ENCODE measurements at regions of chr1 and their contacts with region 1.

Region 1: GRCh38 chr1:91885716-91886506 is at the start of gene TGFBR3:
- DNase-seq: peak; percentile 56 to 89 (median 83)
- ATAC-seq: peak; percentile 77
- H3K4me3 ChIP-seq: peak within 1 kb of the TSS; percentile 61 to 71
- H3K4me3 Mint-ChIP-seq: peak within 1 kb of the TSS; percentile 94
- H3K27ac ChIP-seq: peak within 1 kb of the TSS; percentile 40 to 63
- H3K27ac Mint-ChIP-seq: peak within 1 kb of the TSS; percentile 91
- H3K4me1 ChIP-seq: peaks cover 12% of the 10 kb centered on the region
- H3K4me1 Mint-ChIP-seq: peaks cover 31% of the 10 kb centered on the region
- H3K27me3 ChIP-seq: no peaks in the 10 kb centered on the region
- H3K27me3 Mint-ChIP-seq: no peaks in the 10 kb centered on the region
- CTCF ChIP-seq: no peak
- total RNA-seq, gene TGFBR3: 36.7 to 37.9 TPM

Region 2: GRCh38 chr1:91572044-91572443 is 313.9 kb before region 1 on chr1:
- CTCF ChIA-PET with region 1: no interaction called
- POLR2A ChIA-PET with region 1: no interaction called
- intact Hi-C with region 1: no loop called
- DNase-seq: peak in 1 of 9 experiments; percentile 34
- ATAC-seq: no peak
- H3K4me3 ChIP-seq: no peak overlapping the region
- H3K4me3 Mint-ChIP-seq: no peak overlapping the region
- H3K27ac ChIP-seq: no peak overlapping the region
- H3K27ac Mint-ChIP-seq: no peak overlapping the region
- H3K4me1 ChIP-seq: peaks cover 14% of the 10 kb centered on the region
- H3K4me1 Mint-ChIP-seq: peaks cover 28% of the 10 kb centered on the region
- H3K27me3 ChIP-seq: no peaks in the 10 kb centered on the region
- H3K27me3 Mint-ChIP-seq: no peaks in the 10 kb centered on the region
- CTCF ChIP-seq: no peak

Region 3: GRCh38 chr1:91591175-91591968 is 294.5 kb before region 1 on chr1:
- CTCF ChIA-PET with region 1: no interaction called
- POLR2A ChIA-PET with region 1: no interaction called
- intact Hi-C with region 1: no loop called
- DNase-seq: peak in 1 of 9 experiments; percentile 12
- ATAC-seq: no peak
- H3K4me3 ChIP-seq: peak overlapping the region in 1 of 2 experiments; percentile 16
- H3K4me3 Mint-ChIP-seq: peak overlapping the region; percentile 53
- H3K27ac ChIP-seq: no peak overlapping the region
- H3K27ac Mint-ChIP-seq: no peak overlapping the region
- H3K4me1 ChIP-seq: peaks cover 11% of the 10 kb centered on the region
- H3K4me1 Mint-ChIP-seq: peaks cover 17% of the 10 kb centered on the region
- H3K27me3 ChIP-seq: no peaks in the 10 kb centered on the region
- H3K27me3 Mint-ChIP-seq: no peaks in the 10 kb centered on the region
- CTCF ChIP-seq: no peak

Region 4: DNA sequence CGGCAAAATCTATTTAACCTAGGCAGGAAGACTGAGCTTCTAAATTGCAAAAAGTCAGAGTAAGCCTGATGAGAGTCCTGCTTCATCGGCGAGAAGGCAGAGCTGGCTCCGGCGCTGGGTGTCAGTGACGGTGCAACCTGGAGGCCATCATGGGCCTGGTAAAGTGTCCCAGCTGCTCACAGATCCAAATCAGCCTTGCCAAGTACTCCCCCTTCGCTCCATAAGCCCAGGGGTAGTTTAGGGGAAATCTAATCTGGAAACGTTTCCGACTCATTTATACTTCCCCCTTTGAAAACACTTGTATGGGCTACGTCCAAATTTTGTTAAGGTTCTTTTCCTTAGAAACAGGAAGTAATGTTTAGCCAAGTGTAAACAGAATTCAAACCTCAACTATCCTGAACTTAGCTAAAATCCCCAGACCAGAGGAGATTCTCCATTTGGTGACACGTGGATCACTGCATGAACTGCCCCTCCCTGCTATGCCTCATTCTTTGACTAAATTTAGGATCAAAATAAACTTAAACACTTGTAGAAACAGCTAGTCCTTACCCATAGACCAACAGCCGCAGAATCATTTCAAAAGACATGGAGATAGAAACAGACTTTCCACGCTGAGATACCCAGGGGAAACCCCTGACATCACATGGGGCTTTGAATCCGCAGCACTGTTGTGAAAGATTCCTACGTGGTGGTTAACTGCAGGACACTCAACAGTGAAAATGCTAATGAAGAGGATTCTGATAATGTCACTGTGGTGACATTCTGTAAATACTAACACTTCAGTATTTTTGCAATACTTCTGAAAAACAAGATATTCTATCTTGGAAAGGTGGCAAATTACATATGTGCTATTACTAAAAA is 172.7 kb before region 1 on chr1:
- CTCF ChIA-PET with region 1: no interaction called
- POLR2A ChIA-PET with region 1: no interaction called
- intact Hi-C with region 1: loop called in 1 of 2 experiments (anchors 10 kb)
- DNase-seq: peak in 7 of 9 experiments; percentile 15 to 81 (median 32)
- ATAC-seq: peak; percentile 78
- H3K4me3 ChIP-seq: no peak overlapping the region
- H3K4me3 Mint-ChIP-seq: peak overlapping the region; percentile 2
- H3K27ac ChIP-seq: peak overlapping the region; percentile 5 to 65
- H3K27ac Mint-ChIP-seq: peak overlapping the region; percentile 38
- H3K4me1 ChIP-seq: peaks cover 6% of the 10 kb centered on the region
- H3K4me1 Mint-ChIP-seq: peaks cover 10% of the 10 kb centered on the region
- H3K27me3 ChIP-seq: no peaks in the 10 kb centered on the region
- H3K27me3 Mint-ChIP-seq: no peaks in the 10 kb centered on the region
- CTCF ChIP-seq: no peak

Region 5: GRCh38 chr1:91791103-91791502 is 94.8 kb before region 1 on chr1:
- CTCF ChIA-PET with region 1: interaction called, 11 read pairs
- POLR2A ChIA-PET with region 1: no interaction called
- intact Hi-C with region 1: no loop called
- DNase-seq: peak in 2 of 9 experiments; percentile 25 to 37
- ATAC-seq: peak; percentile 34
- H3K4me3 ChIP-seq: no peak overlapping the region
- H3K4me3 Mint-ChIP-seq: no peak overlapping the region
- H3K27ac ChIP-seq: peak overlapping the region in 1 of 2 experiments; percentile 58
- H3K27ac Mint-ChIP-seq: peak overlapping the region; percentile 12
- H3K4me1 ChIP-seq: peaks cover 27% of the 10 kb centered on the region
- H3K4me1 Mint-ChIP-seq: peaks cover 37% of the 10 kb centered on the region
- H3K27me3 ChIP-seq: no peaks in the 10 kb centered on the region
- H3K27me3 Mint-ChIP-seq: no peaks in the 10 kb centered on the region
- CTCF ChIP-seq: no peak

Region 6: DNA sequence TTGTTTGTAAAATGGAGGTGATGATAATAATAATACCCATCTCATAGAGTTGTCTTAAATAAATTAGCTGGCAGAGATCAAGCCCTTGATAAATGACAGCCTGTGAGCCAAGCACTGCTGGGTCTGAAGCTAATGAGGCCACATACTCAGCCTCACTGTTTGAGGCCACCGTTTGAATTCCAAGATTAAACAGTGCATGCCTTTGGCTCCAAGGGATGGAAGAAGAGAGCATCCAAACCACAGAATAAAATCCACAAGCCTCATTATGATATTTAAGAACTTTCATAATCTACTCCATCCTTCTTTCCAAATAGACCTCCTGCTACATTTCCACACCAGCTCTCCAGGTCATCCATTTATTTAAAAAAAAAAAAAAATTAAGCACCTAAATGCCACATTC is 28.9 kb before region 1 on chr1:
- CTCF ChIA-PET with region 1: no interaction called
- POLR2A ChIA-PET with region 1: no interaction called
- intact Hi-C with region 1: no loop called
- DNase-seq: no peak
- ATAC-seq: no peak
- H3K4me3 ChIP-seq: no peak overlapping the region
- H3K4me3 Mint-ChIP-seq: no peak overlapping the region
- H3K27ac ChIP-seq: no peak overlapping the region
- H3K27ac Mint-ChIP-seq: no peak overlapping the region
- H3K4me1 ChIP-seq: no peaks in the 10 kb centered on the region
- H3K4me1 Mint-ChIP-seq: peaks cover 2% of the 10 kb centered on the region
- H3K27me3 ChIP-seq: no peaks in the 10 kb centered on the region
- H3K27me3 Mint-ChIP-seq: no peaks in the 10 kb centered on the region
- CTCF ChIP-seq: no peak

Region 7: GRCh38 chr1:91872560-91873081 is 13.3 kb before region 1 on chr1:
- CTCF ChIA-PET with region 1: interaction called, 11 read pairs
- POLR2A ChIA-PET with region 1: interaction called, 4 read pairs
- intact Hi-C with region 1: no loop called
- DNase-seq: peak in 4 of 9 experiments; percentile 32 to 59 (median 38)
- ATAC-seq: peak; percentile 51
- H3K4me3 ChIP-seq: no peak overlapping the region
- H3K4me3 Mint-ChIP-seq: peak overlapping the region; percentile 26
- H3K27ac ChIP-seq: peak overlapping the region in 1 of 2 experiments; percentile 37
- H3K27ac Mint-ChIP-seq: peak overlapping the region; percentile 21
- H3K4me1 ChIP-seq: peaks cover 40% of the 10 kb centered on the region
- H3K4me1 Mint-ChIP-seq: peaks cover 58% of the 10 kb centered on the region
- H3K27me3 ChIP-seq: no peaks in the 10 kb centered on the region
- H3K27me3 Mint-ChIP-seq: no peaks in the 10 kb centered on the region
- CTCF ChIP-seq: no peak

Region 8: GRCh38 chr1:91924146-91924545 is 38.2 kb after region 1 on chr1:
- CTCF ChIA-PET with region 1: interaction called, 5 read pairs
- POLR2A ChIA-PET with region 1: no interaction called
- intact Hi-C with region 1: loop called in 1 of 2 experiments (anchors 1 kb)
- DNase-seq: no peak
- ATAC-seq: no peak
- H3K4me3 ChIP-seq: no peak overlapping the region
- H3K4me3 Mint-ChIP-seq: no peak overlapping the region
- H3K27ac ChIP-seq: no peak overlapping the region
- H3K27ac Mint-ChIP-seq: no peak overlapping the region
- H3K4me1 ChIP-seq: no peaks in the 10 kb centered on the region
- H3K4me1 Mint-ChIP-seq: no peaks in the 10 kb centered on the region
- H3K27me3 ChIP-seq: no peaks in the 10 kb centered on the region
- H3K27me3 Mint-ChIP-seq: no peaks in the 10 kb centered on the region
- CTCF ChIP-seq: no peak

Measured in CD8-positive, alpha-beta T cell (primary cell).